Mammary epithelial cell (primary cell): ENCODE measurements at regions of chr20 and their contacts with region 1.

Region 1: DNA sequence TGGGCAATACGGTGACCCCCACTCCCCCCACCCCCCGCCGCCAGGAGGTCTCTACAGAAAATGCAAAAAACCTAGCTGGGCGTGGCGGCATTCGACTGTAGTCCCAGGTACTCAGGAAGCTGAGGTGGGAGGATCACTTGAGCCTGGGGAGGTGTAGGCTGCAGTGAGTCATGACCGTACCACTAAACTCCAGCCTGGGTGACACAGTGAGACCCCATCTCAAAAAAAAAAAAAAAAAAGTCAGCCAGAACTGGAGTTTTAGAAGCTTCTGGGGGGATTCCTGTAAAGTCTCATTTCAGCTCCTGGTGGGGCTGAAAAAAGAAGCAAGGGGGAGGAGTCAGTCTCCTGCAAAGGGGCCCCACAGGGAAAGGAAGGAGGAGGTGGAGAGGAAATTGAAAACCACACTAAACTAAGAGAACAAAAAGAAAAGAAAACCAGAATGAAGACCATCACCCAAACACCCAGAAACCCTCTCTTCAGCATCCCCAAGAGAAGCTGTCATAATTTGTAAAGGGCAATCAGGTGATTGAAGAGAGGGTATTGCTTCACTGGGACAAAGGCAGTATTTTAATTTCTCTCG is 50.4 kb downstream of the NOL4L start:
- DNase-seq: no peak
- H3K4me3 ChIP-seq: no peak overlapping the region
- H3K27ac ChIP-seq: no peak overlapping the region
- H3K4me1 ChIP-seq: peaks cover 6% of the 10 kb centered on the region
- H3K27me3 ChIP-seq: no peaks in the 10 kb centered on the region
- CTCF ChIP-seq: no peak

Region 2: GRCh38 chr20:32574296-32575226 is 39.8 kb after region 1 on chr20:
- CTCF ChIA-PET with region 1: interaction called, 4 read pairs
- dilution Hi-C with region 1: loop called (anchors 5 kb)
- in situ Hi-C with region 1: no loop called
- intact Hi-C with region 1: no loop called
- DNase-seq: peak; percentile 49
- H3K4me3 ChIP-seq: no peak overlapping the region
- H3K27ac ChIP-seq: no peak overlapping the region
- H3K4me1 ChIP-seq: peaks cover 5% of the 10 kb centered on the region
- H3K27me3 ChIP-seq: no peaks in the 10 kb centered on the region
- CTCF ChIP-seq: no peak